ENCODE measurements at regions of chr9 and their contacts with region 1.

Region 1: DNA sequence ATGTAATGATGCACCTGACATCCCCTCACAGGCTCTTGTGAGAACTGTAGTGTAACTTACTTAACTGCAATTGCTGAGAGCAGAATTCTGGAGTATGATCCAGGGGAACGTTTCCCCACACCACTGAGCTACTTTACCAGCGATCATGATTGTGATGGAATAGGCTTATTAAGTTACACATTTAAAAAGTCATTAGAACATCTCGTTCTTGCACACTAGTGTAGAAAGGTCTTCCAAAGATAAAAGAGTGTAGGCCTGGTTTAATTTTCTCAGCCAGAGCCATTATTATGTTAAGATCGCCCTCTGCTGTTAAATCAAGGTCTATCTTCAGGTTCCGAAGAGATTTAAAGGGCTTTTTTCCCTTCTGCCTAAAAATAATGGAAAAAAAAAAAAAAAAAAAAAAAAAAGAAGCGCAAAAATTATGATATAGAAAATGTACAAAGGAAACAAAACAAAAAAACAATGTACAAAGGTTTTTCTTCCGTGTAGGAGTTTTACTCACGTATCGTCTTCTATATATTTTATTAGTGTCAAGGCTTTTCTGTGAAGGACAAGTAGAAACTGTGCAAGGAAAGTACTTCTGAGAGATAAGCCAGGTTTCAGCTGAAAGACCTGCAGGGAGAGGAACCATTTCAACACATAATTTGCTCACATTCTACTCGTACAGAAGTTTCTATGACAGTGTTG is 18.6 kb upstream of the MOB3B start:
- DNase-seq: no peak
- ATAC-seq: peak; percentile 76

Region 2: GRCh38 chr9:27247756-27248155 is 300.4 kb before region 1 on chr9:
- intact Hi-C with region 1: loop called (anchors 2 kb)
- DNase-seq: no peak
- ATAC-seq: no peak

Region 3: GRCh38 chr9:27333241-27334052 is 214.8 kb before region 1 on chr9:
- intact Hi-C with region 1: loop called (anchors 1 kb)
- DNase-seq: no peak
- ATAC-seq: peak; percentile 92

Measured in Right ventricle myocardium inferior (tissue), 1 donor.